Gastrocnemius medialis (tissue), 4 donors: ENCODE measurements at regions of chr15 and their contacts with region 1.

Region 1: DNA sequence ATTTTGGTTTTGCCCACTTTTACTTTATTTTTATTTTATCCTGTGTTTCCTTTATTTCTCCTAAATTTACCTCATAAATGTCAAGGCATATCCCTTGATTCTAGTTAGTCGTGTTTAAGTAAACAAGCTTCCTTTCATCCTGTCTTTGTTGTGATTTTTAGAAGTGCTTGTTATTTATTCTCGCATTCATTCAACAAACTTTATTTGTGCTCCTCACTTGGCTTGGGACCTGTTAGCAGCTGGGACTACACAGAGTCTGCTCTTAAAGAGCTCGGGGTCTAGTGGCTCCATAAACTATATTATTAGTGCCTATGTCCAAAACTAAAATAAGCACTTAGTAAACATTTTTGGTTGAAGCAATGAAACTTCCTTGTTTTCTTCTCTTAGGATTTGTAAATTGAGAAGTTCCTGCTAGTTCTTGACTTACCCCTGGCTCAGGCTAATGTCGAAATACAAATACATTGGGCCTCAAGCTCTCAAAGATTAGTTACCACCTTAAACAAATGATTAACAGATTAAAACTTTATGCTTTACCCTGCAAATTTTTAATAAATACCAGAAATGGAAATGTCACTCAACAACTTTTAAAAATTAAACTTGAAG is 19.1 kb upstream of the DMXL2 start:
- DNase-seq: no peak
- ATAC-seq: no peak
- H3K4me3 ChIP-seq: no peak overlapping the region
- H3K27ac ChIP-seq: no peak overlapping the region
- H3K4me1 ChIP-seq: no peaks in the 10 kb centered on the region
- H3K27me3 ChIP-seq: no peaks in the 10 kb centered on the region
- CTCF ChIP-seq: no peak
- POLR2A ChIP-seq: no peak

Region 2: GRCh38 chr15:51721199-51721960 is 79.8 kb after region 1 on chr15:
- in situ Hi-C with region 1: no loop called
- intact Hi-C with region 1: no loop called
- DNase-seq: no peak
- ATAC-seq: no peak
- H3K4me3 ChIP-seq: no peak overlapping the region
- H3K27ac ChIP-seq: peak overlapping the region in 2 of 4 donors; percentile 28 to 33
- H3K4me1 ChIP-seq: peaks cover 20 to 23% of the 10 kb centered on the region in 2 donors
- H3K27me3 ChIP-seq: no peaks in the 10 kb centered on the region
- CTCF ChIP-seq: no peak
- POLR2A ChIP-seq: no peak

Region 3: DNA sequence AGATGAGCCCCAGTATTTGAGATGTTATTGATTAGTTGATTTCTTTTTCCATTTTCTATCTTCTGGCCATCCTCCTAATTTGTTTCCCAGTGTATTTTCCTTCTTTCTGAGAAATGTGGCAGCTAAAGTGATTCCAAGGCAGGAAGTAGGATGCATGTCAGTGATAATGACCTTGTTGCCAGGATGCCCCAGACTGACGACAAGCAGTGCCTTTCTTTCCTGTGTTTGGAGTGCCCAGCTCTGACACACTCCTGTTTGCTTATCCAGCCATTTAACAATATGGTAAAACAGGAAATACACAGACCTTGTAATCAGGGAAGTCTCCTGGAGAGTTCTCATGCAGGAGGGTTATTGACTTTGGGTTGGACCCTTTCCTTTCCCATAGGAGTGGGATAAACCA is 130.1 kb after region 1 on chr15:
- in situ Hi-C with region 1: loop called in 2 of 4 experiments (anchors 5 kb)
- intact Hi-C with region 1: no loop called
- DNase-seq: no peak
- ATAC-seq: no peak
- H3K4me3 ChIP-seq: no peak overlapping the region
- H3K27ac ChIP-seq: no peak overlapping the region
- H3K4me1 ChIP-seq: no peaks in the 10 kb centered on the region
- H3K27me3 ChIP-seq: no peaks in the 10 kb centered on the region
- CTCF ChIP-seq: no peak
- POLR2A ChIP-seq: no peak

Region 4: DNA sequence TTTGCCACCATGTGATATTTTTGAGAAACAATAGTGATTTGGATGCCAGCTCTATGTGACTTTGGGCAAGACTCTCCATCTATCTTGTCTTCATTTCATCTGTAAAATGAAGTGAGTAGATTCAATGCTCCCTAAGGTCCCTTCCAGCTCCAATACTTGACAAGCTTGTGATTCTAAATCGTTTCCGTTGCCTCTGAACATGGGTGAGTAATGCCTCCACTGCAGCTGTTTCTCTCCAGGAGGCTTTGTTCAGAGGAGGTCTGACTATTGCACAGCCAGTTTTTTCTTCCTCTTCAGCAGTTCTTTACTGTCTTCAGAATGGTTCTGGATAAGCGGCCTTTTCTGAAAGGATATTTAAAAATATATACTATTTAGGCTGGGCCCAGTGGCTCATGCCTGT is 173.0 kb after region 1 on chr15:
- in situ Hi-C with region 1: no loop called
- intact Hi-C with region 1: no loop called
- DNase-seq: no peak
- ATAC-seq: no peak
- H3K4me3 ChIP-seq: no peak overlapping the region
- H3K27ac ChIP-seq: no peak overlapping the region
- H3K4me1 ChIP-seq: no peaks in the 10 kb centered on the region
- H3K27me3 ChIP-seq: no peaks in the 10 kb centered on the region
- CTCF ChIP-seq: no peak
- POLR2A ChIP-seq: no peak